Activated CD4-positive, alpha-beta memory T cell treated with anti-CD3 and anti-CD28 coated beads for 36 hours (primary cell): ENCODE measurements at regions of chr7 and their contacts with region 1.

Region 1: GRCh38 chr7:137934941-137935883 is 66.7 kb downstream of the CREB3L2 start:
- DNase-seq: no peak
- H3K4me3 Mint-ChIP-seq: peak overlapping the region; percentile 65
- H3K27ac Mint-ChIP-seq: peak overlapping the region; percentile 84
- H3K4me1 Mint-ChIP-seq: peaks cover 53% of the 10 kb centered on the region
- H3K27me3 Mint-ChIP-seq: no peaks in the 10 kb centered on the region

Region 2: GRCh38 chr7:137778511-137778910 is 156.7 kb before region 1 on chr7:
- CTCF ChIA-PET with region 1: no interaction called
- POLR2A ChIA-PET with region 1: no interaction called
- intact Hi-C with region 1: no loop called
- DNase-seq: no peak
- H3K4me3 Mint-ChIP-seq: no peak overlapping the region
- H3K27ac Mint-ChIP-seq: no peak overlapping the region
- H3K4me1 Mint-ChIP-seq: no peaks in the 10 kb centered on the region
- H3K27me3 Mint-ChIP-seq: peaks cover 30% of the 10 kb centered on the region

Region 3: GRCh38 chr7:137923380-137923779 is 11.8 kb before region 1 on chr7:
- CTCF ChIA-PET with region 1: interaction called, 4 read pairs
- POLR2A ChIA-PET with region 1: no interaction called
- intact Hi-C with region 1: loop called (anchors 1 kb)
- DNase-seq: peak; percentile 36
- H3K4me3 Mint-ChIP-seq: no peak overlapping the region
- H3K27ac Mint-ChIP-seq: peak overlapping the region; percentile 49
- H3K4me1 Mint-ChIP-seq: peaks cover 38% of the 10 kb centered on the region
- H3K27me3 Mint-ChIP-seq: no peaks in the 10 kb centered on the region

Region 4: DNA sequence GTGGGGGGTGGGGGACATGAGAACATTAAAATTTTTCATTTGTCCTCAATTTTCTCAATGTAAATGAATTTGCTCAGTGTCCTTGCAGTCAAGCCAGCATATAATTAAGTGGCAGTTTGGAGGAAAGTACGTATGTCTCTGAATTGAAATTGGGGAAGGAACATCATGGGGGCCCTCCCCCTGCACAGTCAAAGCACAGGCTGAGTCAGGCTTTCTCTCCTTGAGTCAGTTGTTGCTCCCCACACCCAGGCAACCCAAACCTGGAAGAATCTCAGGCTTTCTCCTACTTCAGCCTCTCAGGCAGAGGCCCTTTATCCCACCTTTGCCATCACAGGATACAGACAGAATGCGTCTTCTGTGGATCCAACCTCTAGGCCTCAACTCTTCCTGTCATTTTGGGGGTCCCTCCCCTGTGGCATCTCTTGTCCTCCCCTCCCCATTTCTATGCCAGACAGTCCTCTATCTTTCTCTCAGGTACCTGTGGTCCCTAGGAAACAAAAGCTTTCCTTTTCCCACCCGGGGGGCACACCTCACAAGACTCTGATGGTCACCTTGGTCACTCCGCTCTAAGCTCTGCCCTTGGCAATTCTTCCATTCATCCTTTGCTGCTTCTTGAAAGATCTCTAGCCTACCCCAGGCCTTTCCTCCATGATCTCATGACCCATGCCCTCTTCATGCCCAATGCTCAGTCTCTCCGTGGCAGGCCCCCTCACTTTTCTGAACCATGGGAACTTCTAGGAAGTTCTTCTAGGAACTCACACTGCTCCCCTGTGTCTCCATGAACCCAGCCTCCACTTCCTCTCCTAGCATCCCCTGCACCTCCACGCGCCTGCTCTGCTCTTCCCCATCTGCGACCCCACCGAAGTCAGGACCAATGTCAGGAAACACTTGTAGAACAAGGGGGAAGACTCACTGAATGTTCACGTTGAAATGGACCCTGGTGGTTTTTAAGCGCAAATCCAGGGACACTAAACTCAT is 26.3 kb after region 1 on chr7:
- CTCF ChIA-PET with region 1: no interaction called
- POLR2A ChIA-PET with region 1: no interaction called
- intact Hi-C with region 1: loop called (anchors 2 kb)
- DNase-seq: peak; percentile 71
- H3K4me3 Mint-ChIP-seq: no peak overlapping the region
- H3K27ac Mint-ChIP-seq: no peak overlapping the region
- H3K4me1 Mint-ChIP-seq: peaks cover 23% of the 10 kb centered on the region
- H3K27me3 Mint-ChIP-seq: no peaks in the 10 kb centered on the region

Region 5: GRCh38 chr7:137992550-137993394 is 57.6 kb after region 1 on chr7:
- CTCF ChIA-PET with region 1: no interaction called
- POLR2A ChIA-PET with region 1: no interaction called
- intact Hi-C with region 1: loop called (anchors 2 kb)
- DNase-seq: peak; percentile 63
- H3K4me3 Mint-ChIP-seq: no peak overlapping the region
- H3K27ac Mint-ChIP-seq: no peak overlapping the region
- H3K4me1 Mint-ChIP-seq: peaks cover 33% of the 10 kb centered on the region
- H3K27me3 Mint-ChIP-seq: no peaks in the 10 kb centered on the region

Region 6: DNA sequence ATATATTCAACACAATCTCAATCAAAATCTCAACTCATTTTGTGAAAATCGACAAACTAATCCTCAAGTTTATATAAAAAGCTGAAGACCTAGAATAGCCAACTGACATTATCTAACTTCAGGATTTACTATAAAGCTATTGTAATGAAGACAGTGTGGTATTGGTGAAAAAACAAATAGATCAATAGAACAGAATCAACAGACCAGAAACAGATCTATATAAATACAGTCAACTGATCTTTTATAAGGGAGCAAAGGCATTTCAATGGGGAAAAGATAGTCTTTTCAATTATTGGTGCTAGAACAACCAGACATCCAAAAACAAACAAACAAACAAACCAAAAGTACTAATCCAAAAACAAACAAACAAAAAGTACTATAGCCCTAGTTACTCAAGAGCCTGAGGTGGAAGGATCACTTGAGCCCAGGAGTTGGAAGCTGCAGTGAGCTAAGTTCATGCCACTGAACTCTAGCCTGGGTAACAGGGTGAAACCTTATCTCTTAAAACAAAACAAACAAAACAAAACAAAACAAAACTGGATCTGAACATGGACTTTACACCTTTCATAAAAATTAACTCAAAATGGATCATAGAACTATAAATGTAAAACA is 114.4 kb after region 1 on chr7:
- CTCF ChIA-PET with region 1: no interaction called
- POLR2A ChIA-PET with region 1: no interaction called
- intact Hi-C with region 1: no loop called
- DNase-seq: no peak
- H3K4me3 Mint-ChIP-seq: no peak overlapping the region
- H3K27ac Mint-ChIP-seq: no peak overlapping the region
- H3K4me1 Mint-ChIP-seq: no peaks in the 10 kb centered on the region
- H3K27me3 Mint-ChIP-seq: peaks cover 8% of the 10 kb centered on the region

Region 7: DNA sequence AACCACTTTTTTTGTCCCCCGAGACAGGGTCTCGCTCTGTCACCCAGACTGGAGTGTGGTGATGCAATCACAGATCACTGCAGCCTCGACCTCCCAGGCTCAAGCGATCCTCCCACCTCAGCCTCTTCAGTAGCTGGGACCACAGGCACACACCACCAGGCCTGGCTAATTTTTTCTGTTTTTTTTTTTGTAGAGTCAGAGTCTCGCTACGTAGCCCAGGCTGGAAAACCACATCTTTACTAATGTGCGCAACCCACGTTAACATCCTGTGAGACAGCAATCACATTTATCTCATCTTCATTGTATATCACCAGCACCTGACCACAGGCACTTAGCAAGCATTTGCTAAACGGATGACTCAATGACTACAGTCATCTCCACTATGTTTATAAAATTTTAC is 940.6 kb after region 1 on chr7:
- CTCF ChIA-PET with region 1: no interaction called
- POLR2A ChIA-PET with region 1: no interaction called
- intact Hi-C with region 1: loop called (anchors 5 kb)
- DNase-seq: peak; percentile 80
- H3K4me3 Mint-ChIP-seq: peak overlapping the region; percentile 29
- H3K27ac Mint-ChIP-seq: peak overlapping the region; percentile 85
- H3K4me1 Mint-ChIP-seq: peaks cover 25% of the 10 kb centered on the region
- H3K27me3 Mint-ChIP-seq: no peaks in the 10 kb centered on the region